ENCODE measurements at regions of chr11 and their contacts with region 1.

Region 1: GRCh38 chr11:71342951-71343827 is 90.8 kb upstream of the SHANK2 start:
- DNase-seq: no peak
- H3K4me3 ChIP-seq: no peak overlapping the region
- H3K27ac ChIP-seq: no peak overlapping the region
- H3K4me1 ChIP-seq: no peaks in the 10 kb centered on the region
- H3K27me3 ChIP-seq: no peaks in the 10 kb centered on the region
- CTCF ChIP-seq: peak in 2 of 3 donors; percentile 38 to 61
- POLR2A ChIP-seq: no peak

Region 2: GRCh38 chr11:71325418-71326327 is 17.5 kb before region 1 on chr11:
- intact Hi-C with region 1: loop called (anchors 2 kb)
- DNase-seq: peak in 1 of 2 donors; percentile 61
- H3K4me3 ChIP-seq: no peak overlapping the region
- H3K27ac ChIP-seq: peak overlapping the region; percentile 43 to 66
- H3K4me1 ChIP-seq: no peaks in the 10 kb centered on the region
- H3K27me3 ChIP-seq: no peaks in the 10 kb centered on the region
- CTCF ChIP-seq: no peak
- POLR2A ChIP-seq: no peak